ENCODE measurements at regions of chr4 and their contacts with region 1.

Region 1: GRCh38 chr4:129093191-129093920 is at the start of gene SCLT1:
- DNase-seq: peak; percentile 93 to 97 (median 94)
- H3K4me3 ChIP-seq: peak within 1 kb of the TSS; percentile 94
- H3K4me3 Mint-ChIP-seq: peak within 1 kb of the TSS in 4 of 7 donors; percentile 12 to 33 (median 17)
- H3K27ac ChIP-seq: peak within 1 kb of the TSS; percentile 98
- H3K27ac Mint-ChIP-seq: peak within 1 kb of the TSS in 1 of 8 donors; percentile 86
- H3K4me1 ChIP-seq: peaks cover 41% of the 10 kb centered on the region
- H3K4me1 Mint-ChIP-seq: peaks cover 33 to 40% (median 38%) of the 10 kb centered on the region in 3 donors
- H3K27me3 ChIP-seq: no peaks in the 10 kb centered on the region
- H3K27me3 Mint-ChIP-seq: no peaks in the 10 kb centered on the region
- total RNA-seq, gene SCLT1: 18.2 to 20.6 TPM

Region 2: GRCh38 chr4:128811571-128812441 is 281.6 kb before region 1 on chr4:
- CTCF ChIA-PET with region 1: interaction called, 7 read pairs
- POLR2A ChIA-PET with region 1: interaction called, 13 read pairs
- DNase-seq: peak; percentile 72 to 83 (median 77)
- H3K4me3 ChIP-seq: peak overlapping the region; percentile 79
- H3K4me3 Mint-ChIP-seq: peak overlapping the region; percentile 95 to 99 (median 97)
- H3K27ac ChIP-seq: peak overlapping the region; percentile 94
- H3K27ac Mint-ChIP-seq: peak overlapping the region; percentile 71 to 98 (median 94)
- H3K4me1 ChIP-seq: peaks cover 33% of the 10 kb centered on the region
- H3K4me1 Mint-ChIP-seq: peaks cover 32 to 43% (median 40%) of the 10 kb centered on the region in 3 donors
- H3K27me3 ChIP-seq: no peaks in the 10 kb centered on the region
- H3K27me3 Mint-ChIP-seq: peaks cover 0 to 2% of the 10 kb centered on the region in 2 donors

Measured in CD8-positive, alpha-beta memory T cell (primary cell).